ENCODE measurements at regions of chr7 and their contacts with region 1.

Region 1: GRCh38 chr7:92809397-92810241 is 26.8 kb downstream of the CDK6 start:
- DNase-seq: peak; percentile 72
- H3K4me3 Mint-ChIP-seq: peak overlapping the region; percentile 66
- H3K27ac Mint-ChIP-seq: peak overlapping the region; percentile 93
- H3K4me1 Mint-ChIP-seq: peaks cover 93% of the 10 kb centered on the region
- H3K27me3 Mint-ChIP-seq: no peaks in the 10 kb centered on the region

Region 2: GRCh38 chr7:92621026-92621540 is 188.5 kb before region 1 on chr7:
- intact Hi-C with region 1: loop called (anchors 1 kb)
- DNase-seq: peak; percentile 74
- H3K4me3 Mint-ChIP-seq: peak overlapping the region; percentile 75
- H3K27ac Mint-ChIP-seq: peak overlapping the region; percentile 89
- H3K4me1 Mint-ChIP-seq: peaks cover 58% of the 10 kb centered on the region
- H3K27me3 Mint-ChIP-seq: no peaks in the 10 kb centered on the region

Region 3: GRCh38 chr7:92682903-92683539 is 126.6 kb before region 1 on chr7:
- intact Hi-C with region 1: loop called (anchors 1 kb)
- DNase-seq: no peak
- H3K4me3 Mint-ChIP-seq: peak overlapping the region; percentile 57
- H3K27ac Mint-ChIP-seq: peak overlapping the region; percentile 95
- H3K4me1 Mint-ChIP-seq: peaks cover 90% of the 10 kb centered on the region
- H3K27me3 Mint-ChIP-seq: no peaks in the 10 kb centered on the region

Region 4: DNA sequence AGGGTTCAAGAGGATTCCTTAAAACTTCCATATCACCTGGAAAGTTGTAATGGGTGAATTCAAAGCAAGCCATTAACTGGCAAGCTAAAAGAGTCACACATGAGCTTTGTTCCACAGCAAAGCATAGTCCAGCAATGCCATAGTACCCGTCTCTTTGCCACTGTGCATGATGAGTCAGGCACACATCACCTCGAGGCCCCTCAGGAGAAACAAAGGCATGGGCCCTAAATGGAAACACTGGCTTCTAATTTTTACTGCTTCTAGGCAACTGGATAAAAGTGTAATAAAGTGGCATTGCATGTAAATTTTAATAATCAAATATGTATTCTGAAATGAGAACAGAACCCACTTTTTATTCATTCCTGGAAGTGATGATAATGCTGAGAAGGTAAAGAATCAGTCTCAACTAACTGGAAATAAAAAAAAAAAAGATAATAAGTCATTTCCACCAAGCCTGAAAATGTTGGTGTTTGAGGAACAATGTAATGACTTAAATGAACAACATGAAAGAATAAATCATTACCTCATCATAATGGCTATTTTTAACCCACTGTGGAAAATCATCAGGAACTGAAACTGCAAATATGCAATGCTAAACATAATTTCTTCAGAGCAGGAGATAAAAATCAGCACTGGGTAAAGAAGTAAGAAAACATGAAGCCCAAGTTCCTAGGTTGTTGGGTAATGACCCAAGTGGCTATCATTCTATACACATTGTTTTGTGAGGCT is 78.1 kb before region 1 on chr7:
- intact Hi-C with region 1: loop called (anchors 1 kb)
- DNase-seq: no peak
- H3K4me3 Mint-ChIP-seq: peak overlapping the region; percentile 23
- H3K27ac Mint-ChIP-seq: peak overlapping the region; percentile 92
- H3K4me1 Mint-ChIP-seq: peaks cover 80% of the 10 kb centered on the region
- H3K27me3 Mint-ChIP-seq: no peaks in the 10 kb centered on the region

Region 5: GRCh38 chr7:92824901-92825480 is 15.4 kb after region 1 on chr7:
- intact Hi-C with region 1: loop called (anchors 1 kb)
- DNase-seq: no peak
- H3K4me3 Mint-ChIP-seq: peak overlapping the region; percentile 70
- H3K27ac Mint-ChIP-seq: peak overlapping the region; percentile 64
- H3K4me1 Mint-ChIP-seq: peaks cover 91% of the 10 kb centered on the region
- H3K27me3 Mint-ChIP-seq: no peaks in the 10 kb centered on the region

Region 6: DNA sequence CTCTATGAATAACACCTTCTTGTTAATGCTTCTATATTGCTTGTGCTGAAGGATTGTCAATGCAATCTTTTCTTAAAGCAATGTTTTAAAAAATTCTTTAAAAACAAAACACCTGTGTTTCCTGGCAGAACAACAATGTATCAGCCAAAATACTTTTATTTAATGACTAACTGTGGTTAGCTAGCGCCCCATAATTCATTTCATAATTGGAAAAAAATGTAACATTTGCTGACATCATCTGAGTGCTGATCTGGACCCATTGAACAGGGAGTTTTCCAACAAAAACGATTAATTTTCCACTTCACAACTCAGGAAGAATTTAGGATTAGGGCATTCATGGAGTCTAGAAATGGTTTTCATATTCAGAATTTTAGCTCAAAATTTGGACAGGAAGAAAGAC is 164.4 kb after region 1 on chr7:
- intact Hi-C with region 1: no loop called
- DNase-seq: no peak
- H3K4me3 Mint-ChIP-seq: no peak overlapping the region
- H3K27ac Mint-ChIP-seq: no peak overlapping the region
- H3K4me1 Mint-ChIP-seq: peaks cover 21% of the 10 kb centered on the region
- H3K27me3 Mint-ChIP-seq: peaks cover 2% of the 10 kb centered on the region

Region 7: GRCh38 chr7:93117852-93118530 is 308.4 kb after region 1 on chr7 and contains the start of gene SAMD9:
- intact Hi-C with region 1: loop called (anchors 2 kb)
- DNase-seq: peak; percentile 63
- H3K4me3 Mint-ChIP-seq: peak within 1 kb of the TSS; percentile 91
- H3K27ac Mint-ChIP-seq: peak within 1 kb of the TSS; percentile 82
- H3K4me1 Mint-ChIP-seq: peaks cover 60% of the 10 kb centered on the region
- H3K27me3 Mint-ChIP-seq: no peaks in the 10 kb centered on the region
- total RNA-seq, gene SAMD9: 11.5 and 11.8 TPM in 2 replicates